Right ventricle myocardium superior (tissue), 1 donor: ENCODE measurements at regions of chr3 and their contacts with region 1.

Region 1: GRCh38 chr3:49445381-49445780 is 16.3 kb upstream of the NICN1 start:
- DNase-seq: no peak
- ATAC-seq: no peak

Region 2: GRCh38 chr3:48989796-48990635 is 455.4 kb before region 1 on chr3 and contains the start of gene P4HTM:
- intact Hi-C with region 1: loop called (anchors 10 kb)
- DNase-seq: peak; percentile 92
- ATAC-seq: peak; percentile 89
- total RNA-seq, gene P4HTM: 25.1 TPM

Region 3: DNA sequence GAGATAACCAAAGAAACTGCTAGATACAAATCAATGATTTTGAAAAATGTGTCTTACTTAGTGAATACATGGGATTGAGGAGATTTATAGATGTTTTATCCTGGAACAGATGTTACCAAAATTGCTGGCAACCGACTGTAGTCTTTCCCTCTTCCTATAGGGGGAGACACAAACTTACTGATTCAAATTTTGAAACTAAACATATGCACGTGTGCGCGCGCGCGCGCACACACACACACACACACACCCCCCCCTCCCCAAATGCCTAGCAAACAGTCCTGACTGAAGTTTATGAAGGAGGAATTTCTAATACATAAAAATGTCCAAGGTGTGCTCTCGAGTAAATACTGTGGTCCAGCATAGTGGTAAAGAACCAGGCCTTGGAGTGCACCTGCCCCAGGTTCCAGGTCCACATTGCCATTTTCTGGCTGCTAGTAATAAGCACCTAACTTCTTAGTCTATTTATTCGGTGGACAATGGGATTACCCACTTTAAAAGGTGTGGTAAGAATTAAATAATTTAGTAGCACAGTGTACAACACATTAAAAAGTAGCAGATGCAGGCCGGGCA is 149.8 kb before region 1 on chr3:
- intact Hi-C with region 1: loop called (anchors 5 kb)
- DNase-seq: no peak
- ATAC-seq: no peak

Region 4: GRCh38 chr3:49339945-49340800 is 105.2 kb before region 1 on chr3 and contains the start of gene USP4:
- intact Hi-C with region 1: loop called (anchors 5 kb)
- DNase-seq: peak; percentile 96
- ATAC-seq: peak; percentile 98
- total RNA-seq, gene USP4: 34.7 TPM